Activated T-helper 1 cell treated with anti-CD3 and anti-CD28 coated beads, Interleukin-12 subunit alpha, Interleukin-12 subunit beta, Interleukin-2, Interleukin-4 antibody, amounts not matched to agents 30 ng/mL and 10 ng/mL and 1 ng/mL, durations not matched to agents 14 hours and 24 hours and 36 hours (primary cell): ENCODE measurements at regions of chr2 and their contacts with region 1.

Region 1: DNA sequence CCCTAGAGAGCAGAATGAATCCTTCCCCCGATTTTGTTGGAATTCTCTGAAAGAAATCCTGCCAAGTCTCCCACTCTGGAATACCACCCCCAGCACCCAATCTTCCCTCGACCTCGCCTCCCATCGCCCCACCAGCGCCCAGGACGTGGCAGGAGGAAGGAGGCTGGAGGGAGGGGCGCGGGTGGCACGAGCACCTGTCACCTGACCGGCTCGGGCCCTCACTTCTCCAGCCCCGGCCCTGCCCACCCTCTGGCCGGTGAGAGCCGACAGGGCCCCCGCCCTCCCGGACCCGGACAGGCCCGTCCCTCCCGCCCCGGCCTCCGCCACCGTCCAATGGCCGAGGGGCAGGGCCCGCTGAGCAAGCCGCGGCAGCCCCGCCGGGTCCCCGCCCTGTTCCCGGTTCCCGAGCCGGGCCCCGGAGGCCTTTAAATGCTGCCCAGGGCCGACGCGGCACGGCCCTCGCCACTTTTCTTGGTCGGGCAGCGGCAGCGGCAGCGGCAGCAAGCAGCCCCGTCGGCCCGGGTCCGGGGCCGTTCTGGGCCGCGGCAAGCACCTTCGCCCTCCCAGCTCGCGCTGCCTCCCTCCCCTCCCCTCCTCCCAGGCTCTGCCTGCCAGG is at the start of gene LGALSL:
- DNase-seq: peak; percentile 17
- H3K4me3 Mint-ChIP-seq: peak within 1 kb of the TSS; percentile 83
- H3K27ac Mint-ChIP-seq: peak within 1 kb of the TSS; percentile 61
- H3K4me1 Mint-ChIP-seq: no peaks in the 10 kb centered on the region
- H3K27me3 Mint-ChIP-seq: peaks cover 47% of the 10 kb centered on the region
- total RNA-seq, gene LGALSL: 2.5 and 3.1 TPM in 2 replicates

Region 2: DNA sequence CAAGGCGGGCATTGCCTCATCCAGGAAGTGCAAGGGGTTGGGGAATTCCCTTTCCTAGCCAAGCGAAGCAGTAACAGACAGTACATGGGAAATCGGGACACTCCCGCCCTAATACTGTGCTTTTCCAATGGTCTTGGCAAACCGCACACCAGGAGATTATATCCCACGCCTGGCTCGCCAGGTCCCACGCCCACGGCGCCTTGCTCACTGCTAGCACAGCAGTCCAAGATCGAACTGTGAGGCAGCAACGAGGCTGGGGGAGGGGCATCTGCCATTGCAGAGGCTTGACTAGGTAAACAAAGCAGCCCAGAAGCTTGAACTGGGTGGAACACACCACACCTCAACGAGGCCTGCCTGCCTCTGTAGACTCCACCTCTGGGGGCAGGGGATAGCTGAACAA is 923.0 kb before region 1 on chr2:
- intact Hi-C with region 1: no loop called
- DNase-seq: no peak
- H3K4me3 Mint-ChIP-seq: no peak overlapping the region
- H3K27ac Mint-ChIP-seq: no peak overlapping the region
- H3K4me1 Mint-ChIP-seq: no peaks in the 10 kb centered on the region
- H3K27me3 Mint-ChIP-seq: peaks cover 2% of the 10 kb centered on the region

Region 3: GRCh38 chr2:64477979-64478378 is 24.1 kb after region 1 on chr2:
- intact Hi-C with region 1: no loop called
- DNase-seq: no peak
- H3K4me3 Mint-ChIP-seq: no peak overlapping the region
- H3K27ac Mint-ChIP-seq: no peak overlapping the region
- H3K4me1 Mint-ChIP-seq: peaks cover 27% of the 10 kb centered on the region
- H3K27me3 Mint-ChIP-seq: peaks cover 6% of the 10 kb centered on the region

Region 4: DNA sequence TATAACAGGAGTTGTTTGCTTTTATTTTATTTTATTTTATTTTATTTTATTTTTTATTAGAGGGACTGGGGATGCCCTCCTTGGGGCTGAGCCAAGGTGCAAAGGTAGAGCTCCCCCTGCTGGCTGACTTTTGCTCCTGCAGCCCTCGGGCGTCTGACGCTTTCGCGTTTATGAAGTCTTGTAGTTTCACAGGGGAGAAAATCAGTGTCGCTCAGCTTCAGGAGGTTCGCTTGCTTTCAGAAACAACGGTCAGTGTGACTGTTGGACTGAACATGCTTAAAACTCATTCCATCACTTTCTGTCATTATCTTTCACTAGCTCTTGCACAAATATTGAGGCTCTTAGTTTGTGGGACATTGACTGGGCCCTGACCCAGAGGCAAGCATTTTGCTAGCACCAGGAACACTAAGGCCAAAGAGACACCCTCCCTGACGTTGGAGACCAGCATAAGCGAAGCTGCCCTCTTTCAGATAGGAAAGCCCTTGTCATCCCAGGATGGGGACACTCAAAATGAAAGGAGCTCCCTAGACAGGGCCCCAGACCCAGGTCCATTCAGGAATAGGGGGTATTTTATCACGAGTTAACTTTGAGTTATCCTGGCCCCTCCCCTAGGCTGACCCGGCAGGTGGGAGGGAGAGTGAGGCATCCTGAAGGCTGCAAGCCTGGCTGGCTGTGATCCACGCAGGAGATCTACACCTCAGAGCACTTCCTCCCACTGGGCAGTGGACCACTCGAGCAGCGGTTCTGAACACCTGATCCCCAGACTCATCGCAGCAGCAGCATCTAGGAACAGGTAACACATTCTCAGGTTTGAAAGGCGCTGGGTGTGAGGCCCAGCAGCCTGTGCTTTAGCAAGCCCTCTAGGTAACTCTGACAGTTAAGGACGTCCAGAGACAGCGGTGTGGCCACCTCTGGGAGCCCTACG is 34.4 kb after region 1 on chr2:
- intact Hi-C with region 1: loop called (anchors 2 kb)
- DNase-seq: peak; percentile 53
- H3K4me3 Mint-ChIP-seq: no peak overlapping the region
- H3K27ac Mint-ChIP-seq: no peak overlapping the region
- H3K4me1 Mint-ChIP-seq: peaks cover 8% of the 10 kb centered on the region
- H3K27me3 Mint-ChIP-seq: peaks cover 24% of the 10 kb centered on the region